ENCODE measurements at regions of chr19 and their contacts with region 1.

Region 1: GRCh38 chr19:33385956-33386355 is 12.4 kb downstream of the CEBPG start:
- DNase-seq: no peak
- CTCF ChIP-seq: no peak

Region 2: GRCh38 chr19:33373701-33374421 is 12.1 kb before region 1 on chr19 and contains the start of gene CEBPG:
- CTCF ChIA-PET with region 1: interaction called, 11 read pairs
- POLR2A ChIA-PET with region 1: no interaction called
- DNase-seq: peak; percentile 75
- CTCF ChIP-seq: no peak